Panc1 (cell line): ENCODE measurements at regions of chr13 and their contacts with region 1.

Region 1: GRCh38 chr13:51645154-51645650 is 60.9 kb downstream of the WDFY2 start:
- DNase-seq: no peak
- ATAC-seq: no peak
- H3K4me3 ChIP-seq: no peak overlapping the region
- H3K27ac ChIP-seq: peak overlapping the region; percentile 73
- H3K4me1 ChIP-seq: peaks cover 31% of the 10 kb centered on the region
- H3K27me3 ChIP-seq: no peaks in the 10 kb centered on the region
- CTCF ChIP-seq: no peak

Region 2: DNA sequence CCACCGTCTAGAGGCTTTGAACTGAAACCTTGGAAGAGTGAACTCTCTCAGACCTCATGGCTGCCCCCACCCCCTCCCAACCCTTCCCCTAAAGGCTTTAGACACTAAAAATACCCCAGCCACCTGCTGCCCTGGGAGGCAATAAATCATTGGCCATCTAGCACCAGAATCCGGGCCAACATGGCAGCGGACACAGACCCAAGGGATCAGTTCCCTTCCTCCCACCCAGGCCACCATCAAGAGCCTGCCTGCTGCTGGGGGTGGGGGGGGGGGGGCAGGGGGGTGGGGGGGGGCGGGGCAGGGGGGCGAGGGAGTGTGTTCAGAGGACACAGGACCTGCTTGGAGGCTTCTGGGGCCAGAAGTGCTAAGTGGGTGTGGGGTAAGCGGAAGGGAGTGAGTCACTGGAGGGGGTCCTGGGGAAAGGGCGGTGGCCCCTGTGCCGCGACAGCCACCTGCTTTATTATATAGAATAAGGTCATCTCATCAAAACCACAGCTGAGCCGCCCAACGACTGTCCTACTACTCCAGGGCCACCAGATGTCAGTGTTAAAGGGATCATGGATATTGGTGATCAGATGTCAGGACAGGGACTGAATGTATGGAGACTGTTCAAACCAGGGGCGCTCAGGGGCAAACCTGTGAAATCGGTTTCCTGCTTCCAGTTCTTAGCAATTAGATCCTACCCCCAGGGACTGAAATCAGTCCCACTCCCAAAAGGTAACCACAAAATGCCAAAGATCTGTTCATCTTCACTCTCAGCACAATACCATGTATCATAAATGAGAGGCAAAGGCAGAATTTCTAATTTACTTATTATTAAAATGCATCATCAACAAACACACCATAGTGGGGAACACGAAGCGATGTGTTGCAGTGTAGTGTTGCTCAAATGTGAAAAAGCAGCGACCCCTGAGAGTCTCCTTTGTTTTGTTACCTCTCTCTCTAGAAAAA is 1992.6 kb before region 1 on chr13:
- CTCF ChIA-PET with region 1: no interaction called
- POLR2A ChIA-PET with region 1: no interaction called
- in situ Hi-C with region 1: no loop called
- intact Hi-C with region 1: no loop called
- DNase-seq: no peak
- ATAC-seq: peak; percentile 84
- H3K4me3 ChIP-seq: no peak overlapping the region
- H3K27ac ChIP-seq: no peak overlapping the region
- H3K4me1 ChIP-seq: no peaks in the 10 kb centered on the region
- H3K27me3 ChIP-seq: no peaks in the 10 kb centered on the region
- CTCF ChIP-seq: peak; percentile 68

Region 3: GRCh38 chr13:51689663-51689996 is 44.4 kb after region 1 on chr13:
- CTCF ChIA-PET with region 1: no interaction called
- POLR2A ChIA-PET with region 1: interaction called, 13 read pairs
- in situ Hi-C with region 1: no loop called
- intact Hi-C with region 1: no loop called
- DNase-seq: no peak
- ATAC-seq: 0 out of 2 replicates have a peak, but pooled peaks have one; percentile 38
- H3K4me3 ChIP-seq: no peak overlapping the region
- H3K27ac ChIP-seq: no peak overlapping the region
- H3K4me1 ChIP-seq: peaks cover 14% of the 10 kb centered on the region
- H3K27me3 ChIP-seq: no peaks in the 10 kb centered on the region
- CTCF ChIP-seq: no peak